B cell (primary cell): ENCODE measurements at regions of chr5 and their contacts with region 1.

Region 1: GRCh38 chr5:124056991-124057723 is 545.2 kb downstream of the CSNK1G3 start:
- DNase-seq: peak; percentile 88
- ATAC-seq: peak; percentile 85
- H3K4me3 ChIP-seq: peak overlapping the region; percentile 30 to 57 (median 54)
- H3K4me3 Mint-ChIP-seq: peak overlapping the region; percentile 94
- H3K27ac ChIP-seq: peak overlapping the region; percentile 71 to 72
- H3K27ac Mint-ChIP-seq: peak overlapping the region; percentile 95
- H3K4me1 ChIP-seq: peaks cover 40 to 45% of the 10 kb centered on the region in 2 donors
- H3K4me1 Mint-ChIP-seq: peaks cover 56% of the 10 kb centered on the region
- H3K27me3 ChIP-seq: no peaks in the 10 kb centered on the region
- H3K27me3 Mint-ChIP-seq: no peaks in the 10 kb centered on the region
- CTCF ChIP-seq: no peak

Region 2: DNA sequence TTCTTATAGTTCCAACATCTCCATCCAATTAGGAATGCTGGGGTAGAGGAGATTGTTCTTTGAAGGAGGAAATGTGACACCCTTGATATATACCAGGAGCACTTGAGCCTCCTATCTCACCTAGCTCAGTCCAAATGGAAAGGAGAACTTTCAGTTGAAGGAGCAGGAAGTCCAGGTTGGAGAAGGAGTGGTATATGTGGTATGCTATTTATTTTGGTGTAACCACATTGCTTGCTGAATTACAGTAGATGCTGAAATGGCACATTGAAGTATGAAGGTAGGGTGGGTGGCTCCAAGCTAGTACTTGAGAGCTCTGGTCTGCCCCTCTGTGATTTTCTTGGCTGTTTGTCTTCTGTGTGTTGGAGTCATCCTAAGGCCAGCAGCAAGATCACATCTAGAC is 539.0 kb before region 1 on chr5:
- CTCF ChIA-PET with region 1: no interaction called
- POLR2A ChIA-PET with region 1: no interaction called
- intact Hi-C with region 1: loop called (anchors 5 kb)
- DNase-seq: peak; percentile 39
- ATAC-seq: peak; percentile 24
- H3K4me3 ChIP-seq: peak overlapping the region in 1 of 5 experiments; percentile 6
- H3K4me3 Mint-ChIP-seq: peak overlapping the region; percentile 62
- H3K27ac ChIP-seq: peak overlapping the region; percentile 74 to 80
- H3K27ac Mint-ChIP-seq: peak overlapping the region; percentile 80
- H3K4me1 ChIP-seq: peaks cover 65 to 88% of the 10 kb centered on the region in 2 donors
- H3K4me1 Mint-ChIP-seq: peaks cover 80% of the 10 kb centered on the region
- H3K27me3 ChIP-seq: no peaks in the 10 kb centered on the region
- H3K27me3 Mint-ChIP-seq: no peaks in the 10 kb centered on the region
- CTCF ChIP-seq: no peak

Region 3: GRCh38 chr5:124071039-124071438 is 13.9 kb after region 1 on chr5:
- CTCF ChIA-PET with region 1: no interaction called
- POLR2A ChIA-PET with region 1: no interaction called
- intact Hi-C with region 1: loop called (anchors 1 kb)
- DNase-seq: no peak
- ATAC-seq: no peak
- H3K4me3 ChIP-seq: no peak overlapping the region
- H3K4me3 Mint-ChIP-seq: no peak overlapping the region
- H3K27ac ChIP-seq: no peak overlapping the region
- H3K27ac Mint-ChIP-seq: no peak overlapping the region
- H3K4me1 ChIP-seq: peaks cover 4 to 12% of the 10 kb centered on the region in 2 donors
- H3K4me1 Mint-ChIP-seq: peaks cover 24% of the 10 kb centered on the region
- H3K27me3 ChIP-seq: no peaks in the 10 kb centered on the region
- H3K27me3 Mint-ChIP-seq: no peaks in the 10 kb centered on the region
- CTCF ChIP-seq: no peak

Region 4: GRCh38 chr5:124583469-124584350 is 526.6 kb after region 1 on chr5:
- CTCF ChIA-PET with region 1: no interaction called
- POLR2A ChIA-PET with region 1: no interaction called
- intact Hi-C with region 1: loop called (anchors 5 kb)
- DNase-seq: peak; percentile 84
- ATAC-seq: peak; percentile 94
- H3K4me3 ChIP-seq: peak overlapping the region in 3 of 5 experiments; percentile 13 to 33 (median 21)
- H3K4me3 Mint-ChIP-seq: peak overlapping the region; percentile 74
- H3K27ac ChIP-seq: peak overlapping the region; percentile 56 to 60
- H3K27ac Mint-ChIP-seq: peak overlapping the region; percentile 89
- H3K4me1 ChIP-seq: peaks cover 19 to 27% of the 10 kb centered on the region in 2 donors
- H3K4me1 Mint-ChIP-seq: peaks cover 32% of the 10 kb centered on the region
- H3K27me3 ChIP-seq: no peaks in the 10 kb centered on the region
- H3K27me3 Mint-ChIP-seq: no peaks in the 10 kb centered on the region
- CTCF ChIP-seq: no peak

Region 5: DNA sequence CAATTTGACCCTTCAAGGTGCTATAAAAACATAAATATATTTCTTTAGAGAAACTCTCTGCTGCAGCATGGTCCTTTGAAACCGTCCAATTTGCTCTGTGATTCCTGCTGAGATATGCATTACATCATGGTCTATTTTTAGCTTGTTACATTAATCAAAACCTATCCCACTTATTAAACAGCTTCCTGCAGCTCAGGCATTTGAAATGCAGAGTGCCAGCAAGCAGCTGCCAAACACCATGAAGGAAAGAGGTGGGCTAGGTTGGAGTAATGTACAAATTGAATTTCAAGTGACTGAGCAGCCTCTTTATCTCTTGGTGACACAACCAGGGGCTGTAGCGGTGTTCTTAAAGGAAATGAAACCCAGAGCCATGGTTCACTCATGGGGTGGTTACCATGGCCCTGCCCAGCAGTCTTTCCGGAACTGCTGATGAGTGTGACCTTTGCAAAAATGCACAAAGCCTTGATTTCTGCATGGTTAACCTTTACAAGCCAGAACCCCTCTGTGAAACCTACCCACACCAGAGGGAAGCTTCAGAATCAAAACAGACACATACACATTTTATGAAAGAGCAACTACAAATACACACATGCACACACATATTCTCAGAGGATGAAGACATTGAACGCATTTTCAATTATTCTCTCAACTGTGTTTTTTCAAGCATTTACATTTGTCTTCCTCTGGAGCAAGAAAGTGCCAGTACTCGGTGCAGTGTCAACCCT is 845.1 kb after region 1 on chr5:
- CTCF ChIA-PET with region 1: no interaction called
- POLR2A ChIA-PET with region 1: no interaction called
- intact Hi-C with region 1: loop called (anchors 10 kb)
- DNase-seq: peak; percentile 81
- ATAC-seq: peak; percentile 98
- H3K4me3 ChIP-seq: peak overlapping the region in 2 of 5 experiments; percentile 0 to 13
- H3K4me3 Mint-ChIP-seq: peak overlapping the region; percentile 66
- H3K27ac ChIP-seq: peak overlapping the region; percentile 58 to 70
- H3K27ac Mint-ChIP-seq: peak overlapping the region; percentile 82
- H3K4me1 ChIP-seq: peaks cover 22 to 27% of the 10 kb centered on the region in 2 donors
- H3K4me1 Mint-ChIP-seq: peaks cover 39% of the 10 kb centered on the region
- H3K27me3 ChIP-seq: no peaks in the 10 kb centered on the region
- H3K27me3 Mint-ChIP-seq: no peaks in the 10 kb centered on the region
- CTCF ChIP-seq: no peak